CD8-positive, alpha-beta T cell (primary cell): ENCODE measurements at regions of chr11 and their contacts with region 1.

Region 1: GRCh38 chr11:88337181-88337986 is at the start of gene CTSC:
- DNase-seq: peak; percentile 80 to 95 (median 91)
- ATAC-seq: peak; percentile 86
- H3K4me3 ChIP-seq: peak within 1 kb of the TSS; percentile 74 to 97
- H3K4me3 Mint-ChIP-seq: peak within 1 kb of the TSS; percentile 100
- H3K27ac ChIP-seq: peak within 1 kb of the TSS; percentile 52 to 80
- H3K27ac Mint-ChIP-seq: peak within 1 kb of the TSS; percentile 96
- H3K4me1 ChIP-seq: peaks cover 50% of the 10 kb centered on the region
- H3K4me1 Mint-ChIP-seq: peaks cover 79% of the 10 kb centered on the region
- H3K27me3 ChIP-seq: no peaks in the 10 kb centered on the region
- H3K27me3 Mint-ChIP-seq: no peaks in the 10 kb centered on the region
- CTCF ChIP-seq: no peak
- total RNA-seq, gene CTSC: 23.5 to 24.8 TPM

Region 2: DNA sequence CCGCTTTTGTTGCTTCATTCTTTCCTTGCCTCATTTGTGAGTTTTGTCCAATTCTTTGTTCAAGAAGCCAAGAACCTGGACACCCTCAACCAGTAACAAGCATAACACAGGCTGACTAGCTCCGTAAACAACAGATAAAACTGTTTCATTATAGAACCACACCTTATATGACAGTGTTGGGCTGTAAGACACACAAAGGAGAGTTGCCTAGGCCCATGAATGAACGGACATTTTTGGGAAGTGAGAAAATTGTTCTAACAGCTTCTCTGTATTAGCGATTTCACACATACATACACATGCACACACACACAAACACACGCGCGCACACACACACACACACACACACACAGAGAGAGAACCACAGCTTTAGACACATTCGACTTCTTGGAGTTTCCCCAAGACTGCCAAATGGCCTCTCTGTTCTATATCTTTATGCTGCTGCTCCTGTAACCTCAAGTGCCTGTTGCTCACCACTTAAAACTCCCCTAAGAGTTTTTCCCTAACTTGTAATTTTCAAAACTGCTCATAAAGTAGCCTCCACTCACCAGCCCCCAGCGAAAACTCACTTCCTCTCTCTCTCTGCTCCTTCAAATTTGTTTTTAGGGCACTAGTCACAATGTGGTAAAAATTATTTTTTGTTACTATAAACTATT is 35.8 kb before region 1 on chr11:
- CTCF ChIA-PET with region 1: no interaction called
- POLR2A ChIA-PET with region 1: no interaction called
- intact Hi-C with region 1: loop called in 1 of 2 experiments (anchors 5 kb)
- DNase-seq: peak in 3 of 9 experiments; percentile 15 to 77 (median 70)
- ATAC-seq: peak; percentile 64
- H3K4me3 ChIP-seq: no peak overlapping the region
- H3K4me3 Mint-ChIP-seq: peak overlapping the region; percentile 57
- H3K27ac ChIP-seq: peak overlapping the region in 1 of 2 experiments; percentile 64
- H3K27ac Mint-ChIP-seq: peak overlapping the region; percentile 77
- H3K4me1 ChIP-seq: no peaks in the 10 kb centered on the region
- H3K4me1 Mint-ChIP-seq: peaks cover 35% of the 10 kb centered on the region
- H3K27me3 ChIP-seq: no peaks in the 10 kb centered on the region
- H3K27me3 Mint-ChIP-seq: no peaks in the 10 kb centered on the region
- CTCF ChIP-seq: no peak

Region 3: GRCh38 chr11:88327061-88327460 is 10.3 kb before region 1 on chr11:
- CTCF ChIA-PET with region 1: interaction called, 5 read pairs
- POLR2A ChIA-PET with region 1: interaction called, 45 read pairs
- intact Hi-C with region 1: loop called in 1 of 2 experiments (anchors 2 kb)
- DNase-seq: no peak
- ATAC-seq: no peak
- H3K4me3 ChIP-seq: no peak overlapping the region
- H3K4me3 Mint-ChIP-seq: no peak overlapping the region
- H3K27ac ChIP-seq: no peak overlapping the region
- H3K27ac Mint-ChIP-seq: peak overlapping the region; percentile 20
- H3K4me1 ChIP-seq: peaks cover 33% of the 10 kb centered on the region
- H3K4me1 Mint-ChIP-seq: peaks cover 92% of the 10 kb centered on the region
- H3K27me3 ChIP-seq: no peaks in the 10 kb centered on the region
- H3K27me3 Mint-ChIP-seq: no peaks in the 10 kb centered on the region
- CTCF ChIP-seq: no peak

Region 4: GRCh38 chr11:88414385-88414861 is 77.0 kb after region 1 on chr11:
- CTCF ChIA-PET with region 1: no interaction called
- POLR2A ChIA-PET with region 1: interaction called, 10 read pairs
- intact Hi-C with region 1: no loop called
- DNase-seq: peak in 4 of 9 experiments; percentile 16 to 60 (median 33)
- ATAC-seq: peak; percentile 53
- H3K4me3 ChIP-seq: peak overlapping the region; percentile 4 to 14
- H3K4me3 Mint-ChIP-seq: peak overlapping the region; percentile 58
- H3K27ac ChIP-seq: peak overlapping the region in 1 of 2 experiments; percentile 39
- H3K27ac Mint-ChIP-seq: no peak overlapping the region
- H3K4me1 ChIP-seq: peaks cover 29% of the 10 kb centered on the region
- H3K4me1 Mint-ChIP-seq: peaks cover 27% of the 10 kb centered on the region
- H3K27me3 ChIP-seq: no peaks in the 10 kb centered on the region
- H3K27me3 Mint-ChIP-seq: no peaks in the 10 kb centered on the region
- CTCF ChIP-seq: no peak

Region 5: DNA sequence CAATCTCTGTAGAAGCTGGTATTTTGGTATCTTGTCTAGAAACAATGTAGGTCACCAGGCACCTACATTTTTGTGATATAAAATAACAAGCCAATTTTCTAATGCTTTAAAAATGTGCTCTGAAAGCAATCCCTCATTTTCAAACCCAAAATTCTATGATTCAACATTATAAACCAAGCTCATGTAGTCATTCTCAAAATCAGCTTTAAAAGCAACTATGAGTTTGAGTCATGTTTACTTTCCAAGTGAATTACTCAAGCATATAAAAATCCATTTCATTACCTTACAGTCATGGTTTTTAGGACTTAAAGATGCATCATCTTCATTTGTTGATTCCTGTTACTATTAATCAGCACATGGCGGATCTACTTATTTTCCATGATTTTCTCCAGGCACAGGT is 512.0 kb after region 1 on chr11:
- CTCF ChIA-PET with region 1: no interaction called
- POLR2A ChIA-PET with region 1: no interaction called
- intact Hi-C with region 1: loop called in 1 of 2 experiments (anchors 10 kb)
- DNase-seq: no peak
- ATAC-seq: no peak
- H3K4me3 ChIP-seq: no peak overlapping the region
- H3K4me3 Mint-ChIP-seq: no peak overlapping the region
- H3K27ac ChIP-seq: no peak overlapping the region
- H3K27ac Mint-ChIP-seq: no peak overlapping the region
- H3K4me1 ChIP-seq: peaks cover 18% of the 10 kb centered on the region
- H3K4me1 Mint-ChIP-seq: peaks cover 18% of the 10 kb centered on the region
- H3K27me3 ChIP-seq: no peaks in the 10 kb centered on the region
- H3K27me3 Mint-ChIP-seq: no peaks in the 10 kb centered on the region
- CTCF ChIP-seq: no peak

Region 6: GRCh38 chr11:90222459-90223247 is 1885.3 kb after region 1 on chr11 and contains the start of gene CHORDC1:
- CTCF ChIA-PET with region 1: no interaction called
- POLR2A ChIA-PET with region 1: no interaction called
- intact Hi-C with region 1: loop called in 1 of 2 experiments (anchors 10 kb)
- DNase-seq: peak; percentile 77 to 96 (median 92)
- ATAC-seq: peak; percentile 84
- H3K4me3 ChIP-seq: peak within 1 kb of the TSS; percentile 55 to 83
- H3K4me3 Mint-ChIP-seq: peak within 1 kb of the TSS; percentile 96
- H3K27ac ChIP-seq: peak within 1 kb of the TSS; percentile 80 to 92
- H3K27ac Mint-ChIP-seq: peak within 1 kb of the TSS; percentile 95
- H3K4me1 ChIP-seq: peaks cover 36% of the 10 kb centered on the region
- H3K4me1 Mint-ChIP-seq: peaks cover 57% of the 10 kb centered on the region
- H3K27me3 ChIP-seq: no peaks in the 10 kb centered on the region
- H3K27me3 Mint-ChIP-seq: no peaks in the 10 kb centered on the region
- CTCF ChIP-seq: no peak
- total RNA-seq, gene CHORDC1: 83.3 to 83.8 TPM